Right cardiac atrium (tissue), 5 donors: ENCODE measurements at regions of chr2 and their contacts with region 1.

Region 1: DNA sequence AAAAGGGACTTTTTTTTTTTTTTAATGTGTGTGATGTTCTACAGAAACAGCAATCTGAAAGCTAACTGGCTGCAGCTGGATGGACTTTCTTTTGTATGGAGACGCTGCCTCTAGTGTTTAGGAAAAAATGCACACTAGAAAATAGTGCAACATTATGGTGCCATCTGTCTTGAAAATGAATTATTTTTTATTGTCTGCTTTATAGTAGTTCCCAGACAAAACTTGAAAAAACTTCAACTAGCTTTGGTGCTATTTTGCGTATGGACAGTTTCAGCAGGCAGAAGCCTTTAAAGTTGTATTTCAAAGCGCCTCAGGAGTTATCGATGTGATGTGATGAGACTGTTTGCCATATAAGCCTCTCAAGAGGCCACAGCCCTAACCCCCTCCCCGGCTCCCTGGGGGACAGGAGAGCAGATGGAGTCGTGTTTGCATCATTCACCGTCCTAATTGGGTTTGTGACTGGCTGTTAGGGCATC is 86.9 kb downstream of the LTBP1 start:
- DNase-seq: peak in 2 of 3 donors; percentile 49 to 54
- ATAC-seq: peak; percentile 62 to 78
- H3K4me3 ChIP-seq: no peak overlapping the region
- H3K27ac ChIP-seq: no peak overlapping the region
- H3K4me1 ChIP-seq: no peaks in the 10 kb centered on the region
- H3K27me3 ChIP-seq: no peaks in the 10 kb centered on the region

Region 2: DNA sequence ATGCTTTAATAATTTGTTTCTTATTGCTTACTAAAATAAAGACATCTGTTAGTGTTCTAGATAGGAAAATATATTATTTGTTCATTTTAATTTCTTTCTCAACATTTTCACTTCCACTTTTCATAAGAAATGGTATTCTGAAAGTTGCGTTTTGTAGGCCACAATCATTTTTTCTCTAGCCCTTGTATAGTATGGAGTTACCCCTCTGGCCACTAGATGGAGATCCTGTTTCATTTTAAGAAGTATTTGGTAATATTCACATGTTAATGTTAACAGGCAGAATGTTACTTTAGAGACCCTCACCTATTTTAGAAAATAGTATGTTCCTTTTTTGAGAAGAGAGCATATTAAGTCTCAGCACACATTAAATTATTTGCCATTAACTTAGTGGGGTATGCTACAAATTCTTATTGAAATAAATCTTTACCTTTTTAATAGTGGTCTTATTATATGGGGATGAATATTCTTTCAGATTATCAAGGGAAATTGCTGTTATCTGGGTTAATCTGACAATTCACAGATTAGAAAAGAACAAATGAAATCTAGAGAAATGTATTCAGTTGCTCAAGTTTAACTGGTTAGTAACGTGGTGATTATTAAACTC is 479.7 kb before region 1 on chr2:
- intact Hi-C with region 1: loop called in 1 of 4 experiments (anchors 10 kb)
- DNase-seq: no peak
- ATAC-seq: peak; percentile 74 to 77
- H3K4me3 ChIP-seq: no peak overlapping the region
- H3K27ac ChIP-seq: no peak overlapping the region
- H3K4me1 ChIP-seq: no peaks in the 10 kb centered on the region
- H3K27me3 ChIP-seq: no peaks in the 10 kb centered on the region

Region 3: DNA sequence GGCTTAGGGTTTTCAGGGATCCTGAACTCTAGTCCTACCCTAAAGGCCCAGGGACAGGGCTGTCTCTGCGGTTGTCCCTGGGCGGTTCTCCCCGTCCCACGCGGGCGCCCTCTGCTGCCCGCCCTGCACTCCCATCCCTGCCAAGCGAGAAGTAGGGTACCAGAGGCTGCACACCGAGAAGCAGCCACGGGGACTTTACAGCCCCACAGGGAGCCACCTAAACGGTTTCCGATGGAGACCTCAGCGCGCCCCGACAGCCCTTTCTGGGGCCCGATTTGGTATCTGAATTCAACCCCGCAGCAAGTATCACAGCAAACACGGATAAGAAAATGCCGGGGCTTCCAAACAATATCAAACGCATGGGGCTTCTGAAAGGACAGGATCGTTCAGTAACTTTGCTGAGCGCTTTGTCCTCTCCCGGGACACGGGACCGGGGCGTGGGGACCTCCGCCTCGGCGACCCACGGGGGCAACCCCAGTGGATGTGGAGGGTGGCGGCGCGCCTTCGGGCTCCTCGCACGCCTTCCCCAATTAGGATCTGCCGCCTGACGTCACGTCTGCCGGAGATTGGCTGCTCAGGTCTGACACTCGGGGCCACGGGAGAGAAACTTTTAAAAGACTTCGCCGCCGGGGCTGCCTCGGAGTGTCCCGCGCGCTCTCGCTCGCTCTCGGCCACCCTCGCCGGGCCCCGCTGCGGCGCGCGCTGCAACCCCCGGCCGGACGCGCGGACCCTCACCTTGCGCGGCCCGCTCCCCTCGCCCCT is 87.1 kb before region 1 on chr2 and contains the start of gene LTBP1:
- intact Hi-C with region 1: loop called in 2 of 4 experiments (anchors 5 to 10 kb)
- DNase-seq: peak; percentile 80 to 91 (median 90)
- ATAC-seq: peak; percentile 87 to 92
- H3K4me3 ChIP-seq: peak within 1 kb of the TSS; percentile 94
- H3K27ac ChIP-seq: peak within 1 kb of the TSS; percentile 70
- H3K4me1 ChIP-seq: no peaks in the 10 kb centered on the region
- H3K27me3 ChIP-seq: no peaks in the 10 kb centered on the region
- total RNA-seq, gene LTBP1: 103 to 218 (median 114) TPM

Region 4: DNA sequence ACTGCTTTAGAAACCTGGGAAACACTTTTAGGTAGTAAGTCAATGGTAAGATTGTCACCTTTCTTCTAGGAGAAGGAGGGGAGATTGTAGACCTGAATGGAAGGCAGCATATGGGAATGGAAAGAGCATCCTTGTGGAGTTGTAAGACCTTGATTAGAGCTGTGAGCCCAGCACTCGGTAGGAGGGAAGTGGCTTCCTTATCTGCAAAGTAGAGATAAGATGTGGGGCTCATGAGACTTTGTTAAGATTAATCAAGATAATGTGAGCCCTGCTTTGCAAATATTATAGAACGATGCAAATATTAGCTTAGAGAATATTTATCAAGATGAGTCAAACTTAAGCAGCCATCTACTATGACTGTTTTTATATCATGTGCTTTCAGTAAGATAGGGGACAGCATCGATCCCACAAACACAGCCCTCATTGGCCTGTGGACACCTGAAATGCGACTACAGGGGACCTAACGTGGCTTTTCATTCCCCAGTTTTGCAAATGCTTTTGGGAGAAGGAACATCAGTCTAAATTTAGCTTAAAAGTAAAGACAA is 156.8 kb after region 1 on chr2:
- intact Hi-C with region 1: no loop called
- DNase-seq: no peak
- ATAC-seq: no peak
- H3K4me3 ChIP-seq: no peak overlapping the region
- H3K27ac ChIP-seq: no peak overlapping the region
- H3K4me1 ChIP-seq: peaks cover 2% of the 10 kb centered on the region
- H3K27me3 ChIP-seq: no peaks in the 10 kb centered on the region

Region 5: DNA sequence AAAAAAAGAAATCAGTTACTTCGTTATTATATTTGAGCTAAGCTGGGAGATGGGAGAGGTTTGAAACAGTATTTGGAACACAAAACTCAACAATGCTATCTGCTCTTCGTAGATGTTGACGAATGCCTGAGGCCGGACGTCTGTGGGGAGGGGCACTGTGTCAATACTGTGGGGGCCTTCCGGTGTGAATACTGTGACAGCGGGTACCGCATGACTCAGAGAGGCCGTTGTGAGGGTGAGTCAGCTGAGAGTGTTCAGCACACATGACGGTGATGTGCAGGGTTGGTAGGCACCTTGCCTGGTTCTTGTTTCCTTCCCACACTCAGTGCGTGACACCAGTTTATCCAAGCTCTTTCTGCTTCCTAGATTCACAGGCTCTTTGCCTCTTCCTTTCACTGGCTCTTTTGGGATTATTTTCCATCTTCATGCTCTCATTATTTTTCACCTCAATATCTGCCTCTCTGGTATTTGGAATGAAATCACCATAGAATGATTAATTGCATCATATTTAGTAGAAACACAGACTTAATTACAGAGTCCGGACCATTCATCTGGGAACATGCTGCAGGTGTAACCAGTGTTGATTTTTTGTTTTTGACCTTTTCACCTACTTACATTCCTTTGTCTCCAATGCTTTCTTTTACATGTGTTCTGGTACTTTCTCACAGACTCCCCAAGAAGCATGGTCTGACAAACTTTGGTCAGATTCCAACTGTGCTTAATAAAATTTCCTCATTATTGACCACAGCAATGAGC is 242.2 kb after region 1 on chr2:
- intact Hi-C with region 1: loop called in 1 of 4 experiments (anchors 10 kb)
- DNase-seq: peak; percentile 61 to 74 (median 70)
- ATAC-seq: peak; percentile 78 to 93
- H3K4me3 ChIP-seq: no peak overlapping the region
- H3K27ac ChIP-seq: peak overlapping the region; percentile 75
- H3K4me1 ChIP-seq: no peaks in the 10 kb centered on the region
- H3K27me3 ChIP-seq: no peaks in the 10 kb centered on the region

Region 6: DNA sequence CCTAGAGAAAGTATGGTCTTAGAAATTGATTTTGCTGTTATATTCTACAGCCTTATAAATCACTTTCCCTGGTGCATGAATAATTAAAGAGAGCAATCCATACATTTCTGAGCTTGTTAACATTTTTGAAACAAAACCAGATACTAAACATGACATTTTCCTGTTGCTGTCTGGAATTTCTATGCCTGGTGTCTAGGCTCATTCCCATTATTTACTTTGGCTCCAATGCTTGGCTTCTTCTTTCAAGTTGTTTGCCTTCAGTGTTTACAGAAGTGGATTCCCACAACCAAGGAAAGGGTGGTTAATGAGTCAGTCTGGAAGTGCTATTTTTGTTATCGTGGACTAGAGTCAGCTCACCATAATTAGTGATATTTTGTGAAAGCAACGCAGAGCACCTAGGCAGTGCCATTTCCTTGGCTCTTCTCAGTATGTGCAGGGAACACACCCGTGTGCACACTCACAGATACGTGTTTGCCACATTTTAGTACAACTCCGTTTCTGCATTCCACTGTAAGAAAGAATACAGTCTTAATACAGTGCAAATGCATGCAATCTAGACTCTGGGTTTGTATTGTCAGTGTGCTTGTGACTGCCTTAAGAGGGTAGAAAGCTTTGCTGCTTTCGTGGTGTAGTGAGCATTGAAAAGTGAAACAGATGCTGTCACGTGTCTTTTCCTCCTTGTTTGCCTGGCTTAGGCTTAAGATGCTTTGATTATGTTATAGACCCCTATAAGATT is 257.8 kb after region 1 on chr2:
- intact Hi-C with region 1: no loop called
- DNase-seq: no peak
- ATAC-seq: peak; percentile 80 to 81
- H3K4me3 ChIP-seq: no peak overlapping the region
- H3K27ac ChIP-seq: peak overlapping the region; percentile 9
- H3K4me1 ChIP-seq: peaks cover 2% of the 10 kb centered on the region
- H3K27me3 ChIP-seq: no peaks in the 10 kb centered on the region

Region 7: DNA sequence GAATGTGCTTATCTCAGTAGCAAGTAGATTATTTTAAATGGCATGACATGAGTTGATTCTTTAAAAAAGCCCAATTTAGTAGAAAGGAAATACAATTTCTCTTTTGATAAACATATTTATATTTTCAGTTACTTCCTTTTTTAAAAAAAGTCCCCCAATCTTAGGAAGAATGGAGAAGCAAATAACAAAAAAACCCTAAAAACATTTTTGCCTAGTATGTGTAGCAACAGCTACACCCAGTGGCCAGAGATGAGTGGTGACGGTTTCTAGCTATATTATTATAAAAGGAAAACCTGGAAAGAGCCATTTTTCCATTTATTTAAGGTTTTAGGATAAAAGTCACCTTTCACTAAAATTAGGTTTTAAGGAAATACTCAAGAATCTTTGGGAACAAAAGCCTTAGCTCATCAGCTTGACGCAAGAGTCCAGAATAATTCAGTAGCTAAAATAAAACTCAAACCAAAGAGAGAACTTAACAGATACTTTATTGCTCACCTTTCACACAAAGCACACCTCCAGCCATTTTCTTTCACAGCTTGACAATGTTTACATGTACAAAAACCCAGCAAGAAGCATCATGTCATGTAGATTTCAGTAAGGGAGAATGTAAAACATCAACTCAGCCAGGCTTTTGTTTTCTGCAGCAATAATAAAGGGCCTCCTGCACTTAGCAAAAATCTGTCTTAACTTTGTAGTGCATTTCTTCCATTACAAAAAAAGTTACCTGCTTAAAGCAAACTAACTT is 549.7 kb after region 1 on chr2:
- intact Hi-C with region 1: loop called in 2 of 4 experiments (anchors 5 to 10 kb)
- DNase-seq: peak in 1 of 3 donors; percentile 66
- ATAC-seq: no peak
- H3K4me3 ChIP-seq: no peak overlapping the region
- H3K27ac ChIP-seq: no peak overlapping the region
- H3K4me1 ChIP-seq: peaks cover 2% of the 10 kb centered on the region
- H3K27me3 ChIP-seq: no peaks in the 10 kb centered on the region